Heart left ventricle (tissue), 16 donors: ENCODE measurements at regions of chr13 and their contacts with region 1.

Region 1: GRCh38 chr13:113837554-113838355 is 26.1 kb downstream of the GAS6 start:
- DNase-seq: peak; percentile 92 to 98 (median 95)
- ATAC-seq: peak; percentile 95 to 97 (median 96)
- H3K4me3 ChIP-seq: peak overlapping the region in 8 of 12 donors; percentile 5 to 43 (median 21)
- H3K27ac ChIP-seq: peak overlapping the region; percentile 8 to 97 (median 86)
- H3K4me1 ChIP-seq: peaks cover 24 to 60% (median 46%) of the 10 kb centered on the region in 12 donors
- H3K27me3 ChIP-seq: no peaks in the 10 kb centered on the region
- CTCF ChIP-seq: no peak
- POLR2A ChIP-seq: no peak

Region 2: GRCh38 chr13:113881614-113882266 is 44.0 kb after region 1 on chr13:
- intact Hi-C with region 1: loop called in 2 of 10 experiments (anchors 2 to 5 kb)
- DNase-seq: peak in 2 of 5 donors; percentile 48 to 59
- ATAC-seq: peak; percentile 10 to 65 (median 45)
- H3K4me3 ChIP-seq: no peak overlapping the region
- H3K27ac ChIP-seq: peak overlapping the region; percentile 56 to 93 (median 82)
- H3K4me1 ChIP-seq: peaks cover 3 to 60% (median 42%) of the 10 kb centered on the region in 12 donors
- H3K27me3 ChIP-seq: no peaks in the 10 kb centered on the region
- CTCF ChIP-seq: no peak
- POLR2A ChIP-seq: no peak

Region 3: GRCh38 chr13:114065141-114065925 is 227.6 kb after region 1 on chr13:
- intact Hi-C with region 1: no loop called
- DNase-seq: peak; percentile 83 to 93 (median 88)
- ATAC-seq: peak; percentile 84 to 94 (median 90)
- H3K4me3 ChIP-seq: peak overlapping the region in 9 of 12 donors; percentile 36 to 56 (median 42)
- H3K27ac ChIP-seq: peak overlapping the region; percentile 49 to 99 (median 88)
- H3K4me1 ChIP-seq: peaks cover 0 to 72% (median 52%) of the 10 kb centered on the region in 12 donors
- H3K27me3 ChIP-seq: no peaks in the 10 kb centered on the region
- CTCF ChIP-seq: no peak
- POLR2A ChIP-seq: no peak